ENCODE measurements at regions of chr6 and their contacts with region 1.

Region 1: DNA sequence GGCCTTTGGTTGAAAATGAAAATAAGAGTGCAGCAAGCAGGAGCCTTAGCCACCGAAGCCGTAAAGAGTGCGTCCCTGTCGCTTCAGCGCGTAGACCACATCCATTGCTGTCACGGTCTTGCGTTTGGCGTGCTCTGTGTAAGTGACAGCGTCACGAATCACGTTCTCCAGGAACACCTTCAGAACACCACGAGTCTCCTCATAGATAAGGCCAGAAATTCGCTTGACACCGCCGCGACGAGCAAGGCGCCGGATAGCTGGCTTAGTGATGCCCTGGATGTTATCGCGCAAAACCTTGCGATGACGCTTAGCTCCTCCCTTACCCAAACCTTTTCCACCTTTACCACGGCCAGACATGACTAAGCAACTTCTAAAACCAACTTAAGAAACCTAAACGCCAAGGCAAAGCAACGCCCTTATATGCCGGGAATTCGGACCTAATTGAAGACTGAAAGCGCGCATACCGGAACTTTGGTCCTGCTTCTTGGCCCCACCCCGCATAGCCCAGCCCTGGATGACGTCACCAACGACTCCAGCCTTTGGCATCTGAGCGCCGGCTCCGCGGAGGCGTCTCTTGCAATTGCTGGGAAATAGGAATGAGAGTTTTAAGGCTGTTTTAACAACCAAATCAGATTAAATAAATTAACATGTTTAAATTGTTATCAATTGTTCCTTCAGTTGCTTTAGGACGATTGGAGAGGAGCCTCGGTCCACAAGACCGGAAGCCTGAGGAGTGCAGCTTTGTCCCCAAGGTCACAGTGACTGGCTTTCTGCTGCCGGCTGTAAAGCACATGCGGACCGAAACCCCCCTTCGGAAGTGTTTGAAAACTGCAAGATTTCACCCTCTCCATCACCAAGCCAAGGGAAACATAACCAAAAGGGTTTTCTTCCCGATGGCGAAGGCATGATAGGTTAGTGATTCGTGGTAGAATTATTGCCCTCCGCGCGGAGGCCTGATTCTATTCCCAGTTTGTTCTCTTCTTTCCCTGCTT is 79.6 kb upstream of the BTN3A2 start:
- DNase-seq: peak; percentile 99
- H3K4me3 ChIP-seq: peak overlapping the region; percentile 42 to 64 (median 56)
- H3K27ac ChIP-seq: peak overlapping the region; percentile 89 to 93 (median 92)
- H3K4me1 ChIP-seq: peaks cover 0 to 18% (median 16%) of the 10 kb centered on the region in 4 donors
- H3K27me3 ChIP-seq: no peaks in the 10 kb centered on the region
- CTCF ChIP-seq: no peak
- EP300 ChIP-seq: peak; percentile 47 to 85 (median 60)
- POLR2A ChIP-seq: peak; percentile 82 to 93

Region 2: DNA sequence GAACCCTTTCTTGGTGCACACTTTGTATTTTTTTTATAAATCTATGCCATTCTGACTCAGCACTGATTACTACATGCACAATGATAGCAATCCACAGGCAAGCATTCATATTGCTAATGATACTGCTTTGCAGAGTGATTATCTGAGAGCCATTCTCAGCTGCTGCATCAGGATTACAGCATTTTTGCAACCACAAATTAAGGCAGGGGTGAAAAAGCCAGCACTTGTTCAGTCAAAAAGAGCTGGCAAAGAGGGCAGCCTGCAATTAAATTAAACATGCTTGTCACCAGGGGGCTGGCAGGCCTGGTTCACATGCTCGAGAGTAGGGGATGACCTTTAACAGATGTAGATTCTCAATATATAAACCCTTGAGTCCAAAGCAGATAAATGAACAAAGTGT is 571.6 kb before region 1 on chr6:
- intact Hi-C with region 1: no loop called
- DNase-seq: no peak
- H3K4me3 ChIP-seq: no peak overlapping the region
- H3K27ac ChIP-seq: no peak overlapping the region
- H3K4me1 ChIP-seq: no peaks in the 10 kb centered on the region
- H3K27me3 ChIP-seq: no peaks in the 10 kb centered on the region
- CTCF ChIP-seq: no peak
- EP300 ChIP-seq: no peak
- POLR2A ChIP-seq: no peak

Region 3: GRCh38 chr6:26122793-26123674 is 162.4 kb before region 1 on chr6:
- intact Hi-C with region 1: loop called (anchors 5 kb)
- DNase-seq: peak; percentile 98
- H3K4me3 ChIP-seq: peak overlapping the region; percentile 80 to 94 (median 90)
- H3K27ac ChIP-seq: peak overlapping the region; percentile 96 to 99 (median 98)
- H3K4me1 ChIP-seq: peaks cover 0 to 21% (median 17%) of the 10 kb centered on the region in 4 donors
- H3K27me3 ChIP-seq: no peaks in the 10 kb centered on the region
- CTCF ChIP-seq: no peak
- EP300 ChIP-seq: peak; percentile 72 to 92 (median 89)
- POLR2A ChIP-seq: peak; percentile 84 to 91

Region 4: DNA sequence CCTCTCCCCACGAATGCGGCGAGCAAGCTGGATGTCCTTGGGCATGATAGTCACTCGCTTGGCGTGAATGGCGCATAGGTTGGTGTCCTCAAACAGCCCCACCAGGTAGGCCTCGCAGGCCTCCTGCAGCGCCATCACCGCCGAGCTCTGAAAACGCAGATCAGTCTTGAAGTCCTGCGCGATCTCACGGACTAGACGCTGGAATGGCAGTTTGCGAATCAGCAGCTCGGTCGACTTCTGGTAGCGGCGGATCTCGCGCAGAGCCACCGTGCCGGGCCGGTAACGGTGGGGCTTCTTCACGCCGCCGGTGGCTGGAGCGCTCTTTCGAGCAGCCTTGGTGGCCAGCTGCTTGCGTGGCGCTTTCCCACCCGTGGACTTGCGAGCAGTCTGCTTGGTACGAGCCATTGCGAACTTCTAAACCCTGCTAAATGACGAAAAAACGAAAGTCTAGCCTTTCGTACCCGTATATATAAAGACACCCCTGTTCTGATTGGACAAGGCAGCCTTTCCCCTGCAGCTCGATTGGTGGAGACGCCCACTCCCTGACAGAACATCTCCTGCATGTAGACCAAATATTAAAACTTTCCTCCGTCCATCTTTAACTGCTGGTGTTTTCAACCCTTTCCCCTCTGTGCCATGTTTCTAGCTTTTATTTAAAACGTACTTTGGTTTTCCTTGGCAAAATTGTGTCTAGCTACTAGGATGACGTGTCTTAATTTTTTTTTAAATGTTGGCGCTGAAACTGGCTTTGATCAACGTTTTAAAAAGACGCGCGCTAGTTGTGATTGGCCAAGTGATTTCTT is 88.4 kb before region 1 on chr6:
- intact Hi-C with region 1: no loop called
- DNase-seq: peak; percentile 95
- H3K4me3 ChIP-seq: peak overlapping the region; percentile 49 to 68 (median 58)
- H3K27ac ChIP-seq: peak overlapping the region; percentile 88 to 97 (median 96)
- H3K4me1 ChIP-seq: peaks cover 0 to 23% (median 21%) of the 10 kb centered on the region in 4 donors
- H3K27me3 ChIP-seq: no peaks in the 10 kb centered on the region
- CTCF ChIP-seq: no peak
- EP300 ChIP-seq: no peak
- POLR2A ChIP-seq: peak; percentile 81 to 84

Region 5: DNA sequence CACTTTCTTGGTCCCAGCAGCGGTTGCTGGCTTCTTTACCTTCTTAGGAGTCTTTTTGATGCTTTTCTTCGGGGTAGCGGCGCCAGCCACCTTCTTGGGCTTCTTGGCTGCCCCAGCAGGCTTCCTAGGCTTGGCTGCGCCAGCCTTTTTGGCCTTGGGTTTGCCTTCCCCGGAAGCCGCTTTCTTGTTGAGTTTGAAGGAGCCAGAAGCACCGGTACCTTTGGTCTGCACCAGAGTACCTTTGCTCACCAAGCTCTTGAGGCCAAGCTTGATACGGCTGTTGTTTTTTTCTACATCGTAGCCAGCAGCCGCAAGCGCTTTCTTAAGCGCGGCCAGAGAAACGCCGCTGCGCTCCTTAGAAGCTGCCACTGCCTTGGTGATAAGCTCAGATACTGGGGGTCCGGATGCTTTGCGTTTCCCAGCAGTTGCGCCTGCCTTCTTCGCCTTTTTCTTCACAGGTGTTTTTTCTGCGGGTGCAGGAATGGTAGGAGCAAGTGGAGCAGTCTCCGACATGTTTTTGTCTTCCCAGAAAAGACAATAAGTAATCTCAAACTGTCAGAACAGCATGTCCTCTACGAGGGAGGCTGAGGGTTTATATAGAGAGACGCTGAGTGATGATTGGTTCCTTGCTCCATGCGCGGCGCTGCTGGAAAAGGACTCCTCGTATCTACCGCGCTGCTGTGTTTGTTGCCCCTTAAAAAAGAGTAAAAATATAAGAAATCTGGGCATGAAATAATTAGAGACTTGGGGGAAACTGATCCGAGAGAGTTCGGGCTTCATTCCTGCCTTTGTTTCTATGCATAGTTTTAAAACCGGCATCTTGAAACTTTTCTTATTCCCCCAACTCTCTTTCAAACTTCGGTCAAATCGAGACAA is 50.8 kb before region 1 on chr6:
- intact Hi-C with region 1: loop called (anchors 2 kb)
- DNase-seq: peak; percentile 89
- H3K4me3 ChIP-seq: peak overlapping the region; percentile 45 to 57 (median 55)
- H3K27ac ChIP-seq: peak overlapping the region; percentile 81 to 90 (median 86)
- H3K4me1 ChIP-seq: peaks cover 0 to 20% (median 13%) of the 10 kb centered on the region in 4 donors
- H3K27me3 ChIP-seq: peaks cover 7 to 66% (median 24%) of the 10 kb centered on the region in 3 donors
- CTCF ChIP-seq: no peak
- EP300 ChIP-seq: peak; percentile 33 to 88 (median 62)
- POLR2A ChIP-seq: peak; percentile 96 to 98

Region 6: GRCh38 chr6:26520853-26521599 is 235.6 kb after region 1 on chr6:
- intact Hi-C with region 1: loop called (anchors 5 kb)
- DNase-seq: peak; percentile 95
- H3K4me3 ChIP-seq: peak overlapping the region; percentile 55 to 65 (median 61)
- H3K27ac ChIP-seq: peak overlapping the region; percentile 96 to 99 (median 98)
- H3K4me1 ChIP-seq: peaks cover 0 to 32% (median 6%) of the 10 kb centered on the region in 4 donors
- H3K27me3 ChIP-seq: no peaks in the 10 kb centered on the region
- CTCF ChIP-seq: no peak
- EP300 ChIP-seq: no peak
- POLR2A ChIP-seq: no peak